ENCODE measurements at regions of chr5 and their contacts with region 1.

Region 1: DNA sequence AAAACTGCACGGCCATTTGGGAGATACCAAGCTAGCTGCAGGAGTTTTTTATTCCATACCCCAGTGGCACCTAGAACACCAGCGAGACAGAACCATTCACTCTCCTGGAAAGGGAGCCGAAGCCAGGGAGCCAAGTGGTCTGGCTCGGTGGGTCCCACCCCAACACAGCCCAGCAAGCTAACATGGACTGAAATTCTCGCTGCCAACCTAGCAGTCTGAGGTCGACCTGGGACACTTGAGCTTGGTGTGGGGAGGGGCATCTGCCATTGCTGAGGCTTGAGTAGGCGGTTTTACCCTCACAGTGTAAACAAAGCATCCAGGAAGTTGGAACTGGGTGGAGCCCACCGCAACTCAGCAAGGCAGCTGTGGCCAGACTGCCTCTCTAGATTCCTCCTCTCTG is 108.9 kb upstream of the CHD1 start:
- DNase-seq: peak; percentile 25 to 83 (median 76)
- H3K4me3 ChIP-seq: peak overlapping the region; percentile 25
- H3K4me3 Mint-ChIP-seq: peak overlapping the region; percentile 13 to 86 (median 73)
- H3K27ac ChIP-seq: no peak overlapping the region
- H3K27ac Mint-ChIP-seq: peak overlapping the region; percentile 73 to 93 (median 90)
- H3K4me1 ChIP-seq: peaks cover 27% of the 10 kb centered on the region
- H3K4me1 Mint-ChIP-seq: peaks cover 53 to 66% (median 61%) of the 10 kb centered on the region in 3 donors
- H3K27me3 ChIP-seq: no peaks in the 10 kb centered on the region
- H3K27me3 Mint-ChIP-seq: no peaks in the 10 kb centered on the region

Region 2: GRCh38 chr5:98891591-98891990 is 146.1 kb before region 1 on chr5:
- CTCF ChIA-PET with region 1: no interaction called
- POLR2A ChIA-PET with region 1: no interaction called
- DNase-seq: no peak
- H3K4me3 ChIP-seq: no peak overlapping the region
- H3K4me3 Mint-ChIP-seq: no peak overlapping the region
- H3K27ac ChIP-seq: no peak overlapping the region
- H3K27ac Mint-ChIP-seq: peak overlapping the region in 1 of 8 donors; percentile 54
- H3K4me1 ChIP-seq: no peaks in the 10 kb centered on the region
- H3K4me1 Mint-ChIP-seq: peaks cover 4 to 13% (median 11%) of the 10 kb centered on the region in 3 donors
- H3K27me3 ChIP-seq: no peaks in the 10 kb centered on the region
- H3K27me3 Mint-ChIP-seq: no peaks in the 10 kb centered on the region

Region 3: GRCh38 chr5:98928873-98929696 is 108.6 kb before region 1 on chr5 and contains the start of gene CHD1:
- CTCF ChIA-PET with region 1: interaction called, 12 read pairs
- POLR2A ChIA-PET with region 1: interaction called, 23 read pairs
- DNase-seq: peak; percentile 92 to 97 (median 97)
- H3K4me3 ChIP-seq: peak within 1 kb of the TSS; percentile 96
- H3K4me3 Mint-ChIP-seq: peak within 1 kb of the TSS; percentile 95 to 99 (median 97)
- H3K27ac ChIP-seq: peak within 1 kb of the TSS; percentile 100
- H3K27ac Mint-ChIP-seq: peak within 1 kb of the TSS; percentile 100
- H3K4me1 ChIP-seq: peaks cover 63% of the 10 kb centered on the region
- H3K4me1 Mint-ChIP-seq: peaks cover 67 to 81% (median 78%) of the 10 kb centered on the region in 3 donors
- H3K27me3 ChIP-seq: no peaks in the 10 kb centered on the region
- H3K27me3 Mint-ChIP-seq: peaks cover 0 to 8% of the 10 kb centered on the region in 2 donors
- total RNA-seq, gene CHD1: 70.8 to 73.6 TPM

Region 4: DNA sequence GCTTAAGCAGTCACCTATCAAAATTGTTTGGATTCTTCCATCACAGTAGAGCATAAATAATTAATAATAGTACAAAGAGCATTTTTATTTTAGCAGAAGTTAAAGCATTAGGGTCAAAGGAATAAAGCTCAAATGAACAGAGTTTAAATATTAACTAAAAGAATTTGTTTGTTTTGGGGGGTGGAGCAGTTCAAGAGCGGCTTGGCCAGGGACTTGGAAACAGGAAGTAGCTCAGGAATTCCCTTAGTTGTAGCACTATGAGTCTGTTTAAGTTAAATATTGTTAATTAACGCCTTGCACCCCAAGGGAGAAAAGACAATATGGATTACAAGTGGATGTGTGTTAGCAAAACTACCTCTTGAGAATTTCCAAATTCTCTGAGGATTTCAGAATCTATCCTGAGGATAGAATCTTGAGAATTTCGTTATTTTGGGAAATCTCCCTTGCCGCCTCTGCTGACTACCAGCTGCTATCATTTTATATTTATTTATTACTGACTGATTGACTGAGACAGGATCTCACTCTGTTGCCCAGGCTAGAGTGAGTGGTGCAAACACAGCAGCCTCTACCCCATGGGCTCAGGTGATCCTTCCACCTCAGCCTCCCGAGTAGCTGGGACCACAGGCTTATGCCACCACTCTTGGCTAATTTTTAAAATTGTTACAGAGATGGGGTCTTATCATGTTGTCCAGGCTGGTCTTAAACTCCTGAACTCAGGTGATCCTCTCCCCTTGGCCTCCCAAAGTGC is 12.2 kb before region 1 on chr5:
- CTCF ChIA-PET with region 1: interaction called, 3 read pairs
- POLR2A ChIA-PET with region 1: interaction called, 10 read pairs
- DNase-seq: no peak
- H3K4me3 ChIP-seq: no peak overlapping the region
- H3K4me3 Mint-ChIP-seq: no peak overlapping the region
- H3K27ac ChIP-seq: no peak overlapping the region
- H3K27ac Mint-ChIP-seq: peak overlapping the region in 1 of 8 donors; percentile 19
- H3K4me1 ChIP-seq: peaks cover 6% of the 10 kb centered on the region
- H3K4me1 Mint-ChIP-seq: peaks cover 16 to 35% (median 34%) of the 10 kb centered on the region in 3 donors
- H3K27me3 ChIP-seq: no peaks in the 10 kb centered on the region
- H3K27me3 Mint-ChIP-seq: no peaks in the 10 kb centered on the region

Region 5: GRCh38 chr5:99936911-99937310 is 899.2 kb after region 1 on chr5:
- CTCF ChIA-PET with region 1: no interaction called
- POLR2A ChIA-PET with region 1: no interaction called
- DNase-seq: no peak
- H3K4me3 ChIP-seq: no peak overlapping the region
- H3K4me3 Mint-ChIP-seq: no peak overlapping the region
- H3K27ac ChIP-seq: no peak overlapping the region
- H3K27ac Mint-ChIP-seq: no peak overlapping the region
- H3K4me1 ChIP-seq: no peaks in the 10 kb centered on the region
- H3K4me1 Mint-ChIP-seq: no peaks in the 10 kb centered on the region
- H3K27me3 ChIP-seq: no peaks in the 10 kb centered on the region
- H3K27me3 Mint-ChIP-seq: no peaks in the 10 kb centered on the region

Measured in CD8-positive, alpha-beta memory T cell (primary cell).